PC-3 (cell line): ENCODE measurements at regions of chr5 and their contacts with region 1.

Region 1: DNA sequence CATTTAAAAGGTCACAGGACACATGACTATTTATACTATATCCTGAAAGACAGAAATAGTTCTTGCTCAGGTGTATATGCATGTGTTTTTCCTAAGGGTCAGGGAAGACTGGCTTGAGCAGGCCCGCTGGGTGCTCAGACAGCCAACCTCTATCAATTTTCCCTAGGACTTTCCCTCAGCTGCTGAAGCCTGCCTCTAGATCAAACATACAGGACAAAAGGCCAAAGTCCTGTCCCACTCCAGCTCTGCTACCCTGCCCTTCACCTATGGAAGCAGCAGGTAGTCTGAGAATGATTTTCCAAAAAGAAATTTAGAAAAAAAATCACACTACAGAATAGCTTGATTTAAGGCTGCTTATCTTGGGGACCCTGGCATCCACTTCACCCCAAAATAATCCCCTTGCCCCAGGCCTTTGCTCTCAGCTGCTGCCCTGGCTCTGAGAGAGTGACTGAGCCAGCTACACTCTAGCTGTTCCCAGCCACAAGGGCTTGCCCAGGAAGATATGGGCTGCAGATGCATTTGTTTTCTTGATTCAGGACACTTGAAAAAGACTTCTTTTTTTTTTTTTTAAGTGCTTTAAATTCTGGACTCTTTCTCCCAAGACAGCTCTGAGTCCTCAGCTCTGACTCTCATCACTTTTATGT is 42.5 kb downstream of the KLHL3 start:
- DNase-seq: no peak
- ATAC-seq: no peak
- H3K4me3 ChIP-seq: no peak overlapping the region
- H3K27ac ChIP-seq: no peak overlapping the region
- H3K4me1 ChIP-seq: no peaks in the 10 kb centered on the region
- H3K27me3 ChIP-seq: no peaks in the 10 kb centered on the region
- CTCF ChIP-seq: no peak

Region 2: DNA sequence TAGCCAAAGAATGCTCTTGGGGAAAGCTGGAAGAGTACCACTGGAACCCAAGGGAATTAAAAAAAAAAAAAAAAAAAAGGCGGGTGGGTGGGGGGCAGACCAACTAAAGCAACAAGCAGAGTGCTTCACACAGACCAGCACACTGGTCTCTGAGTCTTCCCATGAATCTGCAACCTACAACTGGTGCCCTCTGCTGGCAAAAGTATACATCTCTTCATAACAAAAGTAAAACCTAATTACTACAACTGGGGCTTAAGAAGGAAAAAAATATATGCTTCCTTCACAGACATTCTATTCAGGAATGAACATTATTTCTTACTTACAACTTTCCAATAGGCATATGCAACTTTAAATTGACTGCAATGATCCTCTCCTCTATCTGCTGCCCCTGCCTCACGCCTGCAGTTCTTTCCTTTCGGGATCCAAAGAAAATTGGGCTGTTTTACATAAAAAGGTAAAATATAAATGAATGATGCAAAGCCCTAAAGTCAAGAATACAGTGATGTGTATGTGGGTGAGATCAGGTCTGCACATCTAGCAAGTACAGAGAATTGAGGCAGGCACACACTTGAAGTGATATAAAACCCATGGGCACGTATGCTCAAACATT is 49.7 kb after region 1 on chr5:
- CTCF ChIA-PET with region 1: no interaction called
- POLR2A ChIA-PET with region 1: interaction called, 17 read pairs
- intact Hi-C with region 1: no loop called
- DNase-seq: peak; percentile 73
- ATAC-seq: peak; percentile 84
- H3K4me3 ChIP-seq: no peak overlapping the region
- H3K27ac ChIP-seq: no peak overlapping the region
- H3K4me1 ChIP-seq: no peaks in the 10 kb centered on the region
- H3K27me3 ChIP-seq: no peaks in the 10 kb centered on the region
- CTCF ChIP-seq: peak; percentile 63